HCT116 (cell line): ENCODE measurements at regions of chr2 and their contacts with region 1.

Region 1: GRCh38 chr2:28392297-28393113 is at the start of gene FOSL2:
- DNase-seq: peak; percentile 99
- ATAC-seq: peak; percentile 74
- H3K4me3 ChIP-seq: peak within 1 kb of the TSS; percentile 70 to 76
- H3K27ac ChIP-seq: peak within 1 kb of the TSS; percentile 93
- H3K4me1 ChIP-seq: peaks cover 45 to 63% of the 10 kb centered on the region in 2 experiments
- H3K27me3 ChIP-seq: no peaks in the 10 kb centered on the region
- CTCF ChIP-seq: no peak
- POLR2A ChIP-seq: peak; percentile 88
- RAD21 ChIP-seq: no peak
- total RNA-seq, gene FOSL2: 44.8 TPM

Region 2: DNA sequence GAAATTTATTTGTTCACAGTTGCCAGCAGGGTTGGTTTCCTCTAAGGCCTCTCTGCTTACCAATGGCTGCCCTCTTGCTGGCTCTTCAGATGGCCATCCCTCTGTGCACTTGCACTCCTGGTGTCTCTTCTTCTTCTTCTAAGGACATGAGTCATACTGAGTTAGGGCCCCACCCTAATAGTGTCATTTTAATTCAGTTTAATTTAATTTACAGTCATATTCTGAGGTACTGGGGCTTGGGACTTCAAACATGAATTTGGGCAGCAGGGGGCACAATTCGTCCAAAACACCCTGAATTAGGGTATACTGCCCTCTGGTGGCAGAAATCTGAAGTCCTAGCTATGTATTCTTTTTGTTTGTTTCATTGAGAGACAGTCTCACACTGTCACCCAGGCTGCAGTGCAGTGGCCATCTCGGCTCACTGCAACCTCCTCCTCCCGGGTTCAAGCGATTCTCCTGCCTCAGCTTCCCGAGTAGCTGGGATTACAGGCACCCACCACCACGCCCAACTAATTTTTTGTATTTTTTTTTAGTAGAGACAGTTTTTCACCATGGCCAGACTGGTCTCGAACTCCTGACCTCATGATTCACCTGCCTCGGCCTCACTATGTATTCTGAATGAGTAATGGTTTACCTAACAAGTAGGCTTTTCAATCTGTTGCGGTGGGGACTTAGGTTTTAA is 709.0 kb before region 1 on chr2:
- CTCF ChIA-PET with region 1: interaction called, 4 read pairs
- POLR2A ChIA-PET with region 1: no interaction called
- RAD21 ChIA-PET with region 1: no interaction called
- intact Hi-C with region 1: loop called (anchors 5 kb)
- DNase-seq: peak; percentile 96
- ATAC-seq: peak; percentile 86
- H3K4me3 ChIP-seq: peak overlapping the region in 1 of 2 experiments; percentile 40; a peak in 2 of 4 replicates
- H3K27ac ChIP-seq: peak overlapping the region; percentile 70; the same call in 1 of the 2 replicates
- H3K4me1 ChIP-seq: peaks cover 25 to 35% of the 10 kb centered on the region in 2 experiments
- H3K27me3 ChIP-seq: no peaks in the 10 kb centered on the region
- CTCF ChIP-seq: peak; percentile 89 to 100 (median 98)
- POLR2A ChIP-seq: no peak
- RAD21 ChIP-seq: peak; percentile 97

Region 3: GRCh38 chr2:27723372-27724144 is 668.9 kb before region 1 on chr2:
- CTCF ChIA-PET with region 1: interaction called, 7 read pairs
- POLR2A ChIA-PET with region 1: no interaction called
- RAD21 ChIA-PET with region 1: no interaction called
- intact Hi-C with region 1: loop called (anchors 1 kb)
- DNase-seq: peak; percentile 62
- ATAC-seq: peak; percentile 59
- H3K4me3 ChIP-seq: no peak overlapping the region
- H3K27ac ChIP-seq: no peak overlapping the region
- H3K4me1 ChIP-seq: peaks cover 29 to 60% of the 10 kb centered on the region in 2 experiments
- H3K27me3 ChIP-seq: no peaks in the 10 kb centered on the region
- CTCF ChIP-seq: peak in 2 of 3 experiments; percentile 82 to 88; a peak in 4 of 6 replicates
- POLR2A ChIP-seq: no peak
- RAD21 ChIP-seq: no peak

Region 4: DNA sequence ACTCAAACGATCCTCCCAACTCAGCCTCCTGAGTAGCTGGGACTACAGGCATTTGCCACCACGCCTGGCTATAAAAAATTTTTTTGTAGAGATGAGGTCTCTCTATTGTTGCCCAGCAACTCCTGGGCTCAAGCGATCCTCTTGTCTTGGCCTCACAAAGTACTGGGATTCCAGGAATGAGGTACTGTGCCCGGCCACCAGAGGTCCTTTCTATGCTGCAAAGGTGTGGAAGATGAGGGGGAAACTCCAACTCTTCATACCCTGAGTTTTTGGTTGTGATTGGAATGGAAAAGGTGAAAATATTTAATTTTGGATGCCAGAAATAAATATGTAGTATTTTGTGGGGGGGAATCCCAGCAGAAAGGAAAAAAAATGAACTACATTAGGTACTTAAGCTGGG is 585.0 kb before region 1 on chr2:
- CTCF ChIA-PET with region 1: no interaction called
- POLR2A ChIA-PET with region 1: no interaction called
- RAD21 ChIA-PET with region 1: no interaction called
- intact Hi-C with region 1: loop called (anchors 1 kb)
- DNase-seq: peak; percentile 19
- ATAC-seq: peak; percentile 94
- H3K4me3 ChIP-seq: no peak overlapping the region
- H3K27ac ChIP-seq: no peak overlapping the region
- H3K4me1 ChIP-seq: peaks cover 0 to 10% of the 10 kb centered on the region in 2 experiments; a peak in 2 of 4 replicates
- H3K27me3 ChIP-seq: no peaks in the 10 kb centered on the region
- CTCF ChIP-seq: peak; percentile 72 to 79 (median 77)
- POLR2A ChIP-seq: no peak
- RAD21 ChIP-seq: peak; percentile 82

Region 5: DNA sequence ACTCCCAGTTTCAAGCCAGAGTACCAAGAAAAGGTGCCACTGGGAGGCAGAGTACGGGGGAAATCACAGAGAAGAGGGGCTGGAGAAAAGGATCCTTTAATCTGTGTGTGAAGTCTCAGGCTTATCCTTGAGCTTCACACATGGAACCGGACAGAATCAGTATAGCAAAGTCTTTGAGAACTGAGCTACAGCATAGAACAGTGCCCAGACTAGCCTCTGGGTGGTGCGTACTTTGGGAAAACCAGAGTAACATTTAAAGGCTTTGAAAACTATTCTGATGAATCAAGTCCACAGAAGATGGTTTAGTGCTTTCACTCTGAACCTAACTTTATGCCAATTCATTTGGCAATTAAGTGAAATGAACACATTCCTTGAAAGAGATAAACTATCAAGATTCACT is 418.9 kb before region 1 on chr2:
- CTCF ChIA-PET with region 1: no interaction called
- POLR2A ChIA-PET with region 1: no interaction called
- RAD21 ChIA-PET with region 1: no interaction called
- intact Hi-C with region 1: loop called (anchors 5 kb)
- DNase-seq: no peak
- ATAC-seq: peak; percentile 55
- H3K4me3 ChIP-seq: no peak overlapping the region
- H3K27ac ChIP-seq: no peak overlapping the region
- H3K4me1 ChIP-seq: peaks cover 18 to 47% of the 10 kb centered on the region in 2 experiments
- H3K27me3 ChIP-seq: no peaks in the 10 kb centered on the region
- CTCF ChIP-seq: peak in 2 of 3 experiments; percentile 42 to 44; a peak in 3 of 6 replicates
- POLR2A ChIP-seq: no peak
- RAD21 ChIP-seq: peak; percentile 21; the same call in 1 of the 2 replicates

Region 6: DNA sequence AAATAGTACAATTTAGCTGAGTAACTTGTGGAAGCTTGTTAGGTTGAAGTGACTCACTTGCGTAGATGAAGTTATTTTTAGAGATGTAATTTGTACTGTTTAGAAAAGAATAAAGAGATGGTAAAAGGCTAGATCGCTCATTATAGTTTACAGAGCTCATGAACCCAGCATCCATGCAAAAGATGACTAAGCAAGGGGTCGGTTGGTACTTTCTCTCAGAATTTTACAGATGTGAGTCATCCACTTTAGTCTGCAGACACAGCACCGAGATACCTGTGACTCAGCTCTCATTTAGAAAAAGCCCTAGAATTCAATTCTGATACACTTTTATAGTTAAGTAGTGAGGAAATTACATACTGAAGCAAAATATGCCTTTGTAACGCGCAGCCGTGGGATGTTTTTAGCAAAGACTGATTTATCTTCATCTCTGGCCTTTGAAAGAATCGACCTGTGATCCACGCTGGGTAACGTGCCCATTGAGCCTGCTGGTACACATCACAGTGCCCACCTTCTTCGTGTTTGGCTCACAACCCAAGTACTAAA is 116.4 kb before region 1 on chr2:
- CTCF ChIA-PET with region 1: interaction called, 3 read pairs
- POLR2A ChIA-PET with region 1: no interaction called
- RAD21 ChIA-PET with region 1: no interaction called
- intact Hi-C with region 1: loop called (anchors 2 kb)
- DNase-seq: peak; percentile 81
- ATAC-seq: peak; percentile 76
- H3K4me3 ChIP-seq: peak overlapping the region in 1 of 2 experiments; percentile 25; a peak in 2 of 4 replicates
- H3K27ac ChIP-seq: peak overlapping the region; percentile 91
- H3K4me1 ChIP-seq: peaks cover 43 to 63% of the 10 kb centered on the region in 2 experiments
- H3K27me3 ChIP-seq: no peaks in the 10 kb centered on the region
- CTCF ChIP-seq: no peak
- POLR2A ChIP-seq: no peak
- RAD21 ChIP-seq: peak; percentile 36; the same call in 1 of the 2 replicates

Region 7: GRCh38 chr2:28610583-28611201 is 218.2 kb after region 1 on chr2:
- CTCF ChIA-PET with region 1: no interaction called
- POLR2A ChIA-PET with region 1: no interaction called
- RAD21 ChIA-PET with region 1: no interaction called
- intact Hi-C with region 1: no loop called
- DNase-seq: peak; percentile 86
- ATAC-seq: peak; percentile 97
- H3K4me3 ChIP-seq: peak overlapping the region in 1 of 2 experiments; percentile 42; a peak in 2 of 4 replicates
- H3K27ac ChIP-seq: peak overlapping the region; percentile 21
- H3K4me1 ChIP-seq: peaks cover 14 to 38% of the 10 kb centered on the region in 2 experiments
- H3K27me3 ChIP-seq: no peaks in the 10 kb centered on the region
- CTCF ChIP-seq: no peak
- POLR2A ChIP-seq: no peak
- RAD21 ChIP-seq: no peak